A549 (cell line): ENCODE measurements at regions of chr20 and their contacts with region 1.

Region 1: GRCh38 chr20:38947931-38948362 is 14.2 kb upstream of the DHX35 start:
- DNase-seq: no peak
- ATAC-seq: no peak
- H3K4me3 ChIP-seq: no peak overlapping the region
- H3K27ac ChIP-seq: no peak overlapping the region
- H3K4me1 ChIP-seq: no peaks in the 10 kb centered on the region
- CTCF ChIP-seq: no peak
- EP300 ChIP-seq: no peak
- POLR2A ChIP-seq: no peak
- RAD21 ChIP-seq: no peak

Region 2: GRCh38 chr20:38962044-38962927 is 14.3 kb after region 1 on chr20 and contains the start of gene DHX35:
- CTCF ChIA-PET with region 1: interaction called, 16 read pairs
- POLR2A ChIA-PET with region 1: interaction called, 10 read pairs
- DNase-seq: peak; percentile 91 to 97
- ATAC-seq: peak; percentile 98 to 99
- H3K4me3 ChIP-seq: peak within 1 kb of the TSS; percentile 95
- H3K27ac ChIP-seq: peak within 1 kb of the TSS; percentile 95 to 98
- H3K4me1 ChIP-seq: peaks cover 15% of the 10 kb centered on the region; the same call in 2 of the 3 replicates
- CTCF ChIP-seq: peak; percentile 31; the same call in 2 of the 3 replicates
- EP300 ChIP-seq: no peak
- POLR2A ChIP-seq: peak; percentile 30
- RAD21 ChIP-seq: peak; percentile 17 to 19; a peak in 1 of 5 replicates
- polyA plus RNA-seq, gene DHX35: 13.8 and 14.4 TPM in 2 replicates